CD4-positive, alpha-beta T cell (primary cell): ENCODE measurements at regions of chr1 and their contacts with region 1.

Region 1: GRCh38 chr1:3624200-3625136 is at the start of gene TPRG1L:
- DNase-seq: peak; percentile 97 to 99 (median 98)
- ATAC-seq: peak; percentile 92
- H3K4me3 ChIP-seq: peak within 1 kb of the TSS; percentile 93
- H3K4me3 Mint-ChIP-seq: peak within 1 kb of the TSS; percentile 96
- H3K27ac ChIP-seq: peak within 1 kb of the TSS; percentile 29 to 64
- H3K27ac Mint-ChIP-seq: peak within 1 kb of the TSS; percentile 98
- H3K4me1 ChIP-seq: peaks cover 34% of the 10 kb centered on the region
- H3K4me1 Mint-ChIP-seq: peaks cover 51% of the 10 kb centered on the region
- H3K27me3 ChIP-seq: no peaks in the 10 kb centered on the region
- H3K27me3 Mint-ChIP-seq: no peaks in the 10 kb centered on the region
- CTCF ChIP-seq: no peak
- total RNA-seq, gene TPRG1L: 46.5 to 48.3 TPM

Region 2: DNA sequence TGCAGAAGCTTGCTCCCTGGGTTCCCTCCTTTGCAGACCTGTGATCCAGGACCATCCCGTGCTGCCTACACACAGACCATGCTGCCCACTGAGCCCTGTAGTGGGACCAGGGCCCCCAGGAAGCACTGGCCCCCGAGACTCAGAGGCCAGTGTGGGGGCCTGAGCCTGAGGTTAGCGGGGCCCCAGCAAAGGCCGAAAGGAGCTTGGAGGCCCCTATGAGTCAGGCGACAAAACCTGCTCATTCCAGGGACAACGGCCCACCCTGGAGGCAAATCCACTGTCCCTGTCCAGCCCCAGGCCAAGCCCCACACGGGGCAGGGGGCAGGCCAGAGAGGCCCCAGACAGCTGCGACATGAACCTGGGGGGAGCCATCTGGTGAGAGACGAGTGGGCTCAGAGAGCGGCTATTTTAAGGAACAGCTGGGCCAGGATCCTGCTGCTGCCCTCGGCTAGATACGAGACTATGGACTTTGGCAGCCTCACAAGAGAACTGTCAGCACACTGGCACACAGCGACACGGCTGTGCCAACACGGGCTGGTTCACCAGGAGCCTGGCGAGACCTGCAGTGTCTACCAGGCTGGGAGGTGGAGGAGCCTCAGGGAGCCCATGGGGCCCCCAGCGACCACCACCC is 95.3 kb before region 1 on chr1:
- CTCF ChIA-PET with region 1: interaction called, 3 read pairs
- POLR2A ChIA-PET with region 1: interaction called, 6 read pairs
- intact Hi-C with region 1: loop called in 1 of 2 experiments (anchors 2 kb)
- DNase-seq: no peak
- ATAC-seq: no peak
- H3K4me3 ChIP-seq: no peak overlapping the region
- H3K4me3 Mint-ChIP-seq: peak overlapping the region; percentile 84
- H3K27ac ChIP-seq: no peak overlapping the region
- H3K27ac Mint-ChIP-seq: no peak overlapping the region
- H3K4me1 ChIP-seq: peaks cover 18% of the 10 kb centered on the region
- H3K4me1 Mint-ChIP-seq: peaks cover 32% of the 10 kb centered on the region
- H3K27me3 ChIP-seq: no peaks in the 10 kb centered on the region
- H3K27me3 Mint-ChIP-seq: no peaks in the 10 kb centered on the region
- CTCF ChIP-seq: no peak

Region 3: GRCh38 chr1:3577300-3577699 is 47.2 kb before region 1 on chr1:
- CTCF ChIA-PET with region 1: no interaction called
- POLR2A ChIA-PET with region 1: no interaction called
- intact Hi-C with region 1: no loop called
- DNase-seq: no peak
- ATAC-seq: no peak
- H3K4me3 ChIP-seq: no peak overlapping the region
- H3K4me3 Mint-ChIP-seq: no peak overlapping the region
- H3K27ac ChIP-seq: no peak overlapping the region
- H3K27ac Mint-ChIP-seq: no peak overlapping the region
- H3K4me1 ChIP-seq: no peaks in the 10 kb centered on the region
- H3K4me1 Mint-ChIP-seq: no peaks in the 10 kb centered on the region
- H3K27me3 ChIP-seq: no peaks in the 10 kb centered on the region
- H3K27me3 Mint-ChIP-seq: no peaks in the 10 kb centered on the region
- CTCF ChIP-seq: no peak

Region 4: GRCh38 chr1:3649342-3650247 is 25.1 kb after region 1 on chr1 and contains the start of gene WRAP73:
- CTCF ChIA-PET with region 1: interaction called, 6 read pairs
- POLR2A ChIA-PET with region 1: interaction called, 4 read pairs
- intact Hi-C with region 1: loop called in 1 of 2 experiments (anchors 1 kb)
- DNase-seq: peak; percentile 79 to 96 (median 85)
- ATAC-seq: peak; percentile 97
- H3K4me3 ChIP-seq: peak within 1 kb of the TSS; percentile 84
- H3K4me3 Mint-ChIP-seq: peak within 1 kb of the TSS; percentile 86
- H3K27ac ChIP-seq: peak within 1 kb of the TSS in 1 of 2 donors; percentile 50
- H3K27ac Mint-ChIP-seq: peak within 1 kb of the TSS; percentile 32
- H3K4me1 ChIP-seq: peaks cover 37% of the 10 kb centered on the region
- H3K4me1 Mint-ChIP-seq: peaks cover 37% of the 10 kb centered on the region
- H3K27me3 ChIP-seq: peaks cover 31 to 34% of the 10 kb centered on the region in 2 experiments
- H3K27me3 Mint-ChIP-seq: peaks cover 32% of the 10 kb centered on the region
- CTCF ChIP-seq: no peak
- total RNA-seq, gene WRAP73: 22.3 to 22.7 TPM

Region 5: DNA sequence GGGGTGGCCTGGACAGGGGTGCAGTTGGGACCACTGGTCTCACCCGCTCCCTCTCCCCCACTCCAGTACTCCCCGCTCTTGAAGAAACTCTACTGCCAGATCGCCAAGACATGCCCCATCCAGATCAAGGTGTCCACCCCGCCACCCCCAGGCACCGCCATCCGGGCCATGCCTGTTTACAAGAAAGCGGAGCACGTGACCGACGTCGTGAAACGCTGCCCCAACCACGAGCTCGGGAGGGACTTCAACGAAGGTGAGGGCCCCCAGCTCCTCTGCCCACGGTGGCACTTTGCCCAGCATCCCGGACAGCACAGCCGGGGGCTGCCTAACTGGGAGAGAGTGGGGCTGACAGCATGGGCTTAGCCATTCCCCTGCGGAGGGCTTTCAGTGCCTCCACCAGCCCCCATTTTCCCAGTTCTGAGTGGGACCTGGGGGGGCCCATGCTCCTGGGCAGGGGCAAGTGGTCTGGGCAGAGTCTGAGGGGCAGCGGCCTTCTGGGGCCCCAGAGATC is 97.5 kb after region 1 on chr1:
- CTCF ChIA-PET with region 1: no interaction called
- POLR2A ChIA-PET with region 1: no interaction called
- intact Hi-C with region 1: loop called in 1 of 2 experiments (anchors 5 kb)
- DNase-seq: no peak
- ATAC-seq: no peak
- H3K4me3 ChIP-seq: no peak overlapping the region
- H3K4me3 Mint-ChIP-seq: no peak overlapping the region
- H3K27ac ChIP-seq: no peak overlapping the region
- H3K27ac Mint-ChIP-seq: no peak overlapping the region
- H3K4me1 ChIP-seq: peaks cover 30% of the 10 kb centered on the region
- H3K4me1 Mint-ChIP-seq: peaks cover 8% of the 10 kb centered on the region
- H3K27me3 ChIP-seq: no peaks in the 10 kb centered on the region
- H3K27me3 Mint-ChIP-seq: peaks cover 7% of the 10 kb centered on the region
- CTCF ChIP-seq: no peak

Region 6: GRCh38 chr1:3732434-3733093 is 108.1 kb after region 1 on chr1:
- CTCF ChIA-PET with region 1: no interaction called
- POLR2A ChIA-PET with region 1: no interaction called
- intact Hi-C with region 1: no loop called
- DNase-seq: no peak
- ATAC-seq: no peak
- H3K4me3 ChIP-seq: no peak overlapping the region
- H3K4me3 Mint-ChIP-seq: no peak overlapping the region
- H3K27ac ChIP-seq: no peak overlapping the region
- H3K27ac Mint-ChIP-seq: no peak overlapping the region
- H3K4me1 ChIP-seq: no peaks in the 10 kb centered on the region
- H3K4me1 Mint-ChIP-seq: no peaks in the 10 kb centered on the region
- H3K27me3 ChIP-seq: no peaks in the 10 kb centered on the region
- H3K27me3 Mint-ChIP-seq: peaks cover 7% of the 10 kb centered on the region
- CTCF ChIP-seq: no peak

Region 7: DNA sequence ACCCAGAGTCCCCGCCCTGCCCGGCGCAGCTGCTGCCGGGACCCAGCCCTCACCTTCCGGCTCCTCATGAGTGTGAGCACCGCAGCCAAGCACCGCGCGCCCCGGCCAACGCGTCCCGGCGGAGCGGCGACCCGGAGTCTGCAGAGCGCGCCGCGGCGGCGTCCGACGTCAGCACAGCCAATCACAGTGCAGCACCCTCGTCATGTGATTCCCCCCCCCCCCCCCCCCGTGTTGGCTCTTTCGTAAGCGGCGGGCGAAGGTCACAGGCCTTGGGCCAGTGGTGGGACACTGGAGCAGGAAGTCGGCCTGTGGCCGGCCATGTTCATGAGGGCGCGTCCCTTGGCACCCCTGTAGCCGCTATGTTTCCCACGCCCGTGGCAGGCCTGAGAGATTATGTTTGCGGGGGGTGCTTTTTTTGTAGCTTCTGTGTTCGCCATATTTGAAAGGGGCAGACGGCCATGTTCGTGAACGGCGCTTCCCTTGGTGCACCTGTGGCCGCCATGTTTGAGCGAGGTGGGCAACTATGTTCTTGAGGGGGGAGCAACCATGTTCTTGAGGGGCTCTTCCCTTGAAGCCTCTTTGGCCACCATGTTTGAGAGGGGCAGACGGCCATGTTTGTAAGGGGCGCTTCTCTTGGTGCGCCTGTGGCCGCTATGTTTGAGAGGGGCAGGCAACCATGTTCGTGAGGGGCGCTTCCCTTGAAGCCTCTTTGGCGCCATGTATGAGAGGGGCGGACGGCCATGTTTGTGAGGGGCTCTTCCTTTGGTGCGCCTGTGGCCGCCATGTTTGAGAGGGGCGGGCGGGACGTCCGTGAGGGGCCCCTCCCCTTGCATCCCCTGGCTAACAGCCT is 275.9 kb after region 1 on chr1 and contains the start of gene C1orf174:
- CTCF ChIA-PET with region 1: no interaction called
- POLR2A ChIA-PET with region 1: no interaction called
- intact Hi-C with region 1: loop called in 1 of 2 experiments (anchors 10 kb)
- DNase-seq: peak; percentile 87 to 99 (median 92)
- ATAC-seq: peak; percentile 83
- H3K4me3 ChIP-seq: peak within 1 kb of the TSS; percentile 85
- H3K4me3 Mint-ChIP-seq: peak within 1 kb of the TSS; percentile 93
- H3K27ac ChIP-seq: peak within 1 kb of the TSS; percentile 81 to 96
- H3K27ac Mint-ChIP-seq: peak within 1 kb of the TSS; percentile 90
- H3K4me1 ChIP-seq: peaks cover 47% of the 10 kb centered on the region
- H3K4me1 Mint-ChIP-seq: peaks cover 69% of the 10 kb centered on the region
- H3K27me3 ChIP-seq: no peaks in the 10 kb centered on the region
- H3K27me3 Mint-ChIP-seq: no peaks in the 10 kb centered on the region
- CTCF ChIP-seq: no peak
- total RNA-seq, gene C1orf174: 16.8 to 18.5 TPM